ENCODE measurements at regions of chr22 and their contacts with region 1.

Region 1: DNA sequence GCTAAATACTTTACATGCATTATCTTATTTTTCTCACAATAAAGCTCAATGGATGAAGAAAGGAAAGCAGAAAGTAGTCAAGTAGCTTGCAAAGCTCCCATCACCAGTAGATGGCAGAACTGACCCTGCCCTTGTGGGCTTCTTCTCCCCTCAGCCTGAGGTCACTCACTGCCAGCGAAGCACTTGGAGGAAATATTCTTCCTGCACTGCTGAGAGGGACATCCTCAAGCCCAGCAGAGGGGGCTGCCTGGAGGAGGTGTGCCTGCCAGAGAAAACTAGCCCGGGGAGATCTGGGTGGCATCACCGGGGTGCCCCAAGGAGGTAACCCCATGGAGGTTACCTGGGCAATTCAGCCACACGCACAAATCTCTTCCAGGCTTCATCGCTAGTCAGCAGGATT is 6.6 kb downstream of the APOL4 start:
- DNase-seq: peak in 2 of 4 donors; percentile 67 to 75
- ATAC-seq: peak; percentile 90
- H3K4me3 ChIP-seq: no peak overlapping the region
- H3K27ac ChIP-seq: no peak overlapping the region
- H3K4me1 ChIP-seq: peaks cover 3 to 35% of the 10 kb centered on the region in 2 donors
- H3K27me3 ChIP-seq: no peaks in the 10 kb centered on the region
- CTCF ChIP-seq: peak; percentile 63 to 67

Region 2: DNA sequence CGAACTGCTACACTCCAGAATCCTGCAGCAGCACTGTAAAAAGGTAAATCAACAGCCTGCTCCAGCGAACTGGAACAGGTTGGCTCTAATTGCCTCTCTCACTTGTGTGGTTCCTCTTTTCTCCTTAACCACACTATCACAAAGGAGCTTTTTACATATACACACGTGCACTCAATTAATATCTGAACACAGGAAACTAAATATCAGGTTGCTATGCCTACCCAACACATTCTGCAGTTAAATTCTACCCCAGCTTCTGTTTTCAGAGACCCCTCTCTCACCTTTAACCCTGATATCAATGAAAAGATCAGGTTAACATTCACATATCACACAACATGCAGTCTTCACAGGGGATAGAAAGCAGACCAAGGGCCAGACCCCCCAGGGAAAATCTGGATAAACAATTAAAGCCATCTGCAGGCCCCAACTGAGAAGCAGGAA is 177.3 kb before region 1 on chr22:
- intact Hi-C with region 1: no loop called
- DNase-seq: no peak
- ATAC-seq: no peak
- H3K4me3 ChIP-seq: no peak overlapping the region
- H3K27ac ChIP-seq: no peak overlapping the region
- H3K4me1 ChIP-seq: peaks cover 19 to 33% of the 10 kb centered on the region in 2 donors
- H3K27me3 ChIP-seq: no peaks in the 10 kb centered on the region
- CTCF ChIP-seq: no peak

Region 3: GRCh38 chr22:36277482-36278291 is 82.7 kb after region 1 on chr22:
- intact Hi-C with region 1: loop called in 1 of 2 experiments (anchors 10 kb)
- DNase-seq: peak in 3 of 4 donors; percentile 29 to 63 (median 51)
- ATAC-seq: peak; percentile 85
- H3K4me3 ChIP-seq: no peak overlapping the region
- H3K27ac ChIP-seq: no peak overlapping the region
- H3K4me1 ChIP-seq: peaks cover 6 to 17% of the 10 kb centered on the region in 2 donors
- H3K27me3 ChIP-seq: no peaks in the 10 kb centered on the region
- CTCF ChIP-seq: peak; percentile 63 to 73

Region 4: DNA sequence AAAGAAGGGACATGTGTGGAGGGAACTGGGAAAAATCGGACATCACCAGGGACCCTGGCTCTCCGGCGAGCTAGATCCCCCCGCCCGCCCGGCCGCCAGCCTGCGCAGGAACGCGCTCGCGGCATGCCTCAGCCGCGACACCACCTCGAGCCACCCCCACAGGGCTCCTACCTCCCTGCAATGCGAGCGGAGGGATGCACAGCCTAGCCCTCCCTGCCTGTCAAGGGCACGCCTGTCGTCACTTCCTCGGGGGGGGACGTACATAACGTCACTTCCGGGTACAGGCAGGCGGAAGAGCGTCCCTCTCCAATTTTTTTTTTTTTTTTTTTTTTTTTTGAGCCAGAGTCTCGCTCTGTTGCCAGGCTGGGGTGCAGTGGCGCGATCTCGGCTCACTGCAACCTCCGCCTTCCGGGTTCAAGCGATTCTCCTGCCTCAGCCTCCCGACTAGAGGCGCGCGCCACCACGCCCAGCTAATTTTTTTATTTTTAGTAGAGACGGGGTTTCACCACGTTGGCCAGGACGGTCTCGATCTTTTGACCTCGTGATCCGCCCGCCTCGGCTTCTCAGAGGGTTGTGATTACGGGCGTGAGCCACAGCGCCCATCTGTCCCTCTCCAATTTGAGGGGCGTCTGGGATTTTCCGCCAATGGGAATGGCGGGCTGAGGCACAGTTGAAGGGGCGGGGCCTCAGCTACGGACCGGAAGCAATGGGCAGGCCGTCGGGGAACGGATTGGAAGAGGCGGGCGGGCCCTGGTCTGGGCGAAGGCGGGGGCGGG is 286.6 kb after region 1 on chr22 and contains the start of gene TXN2:
- intact Hi-C with region 1: loop called in 1 of 2 experiments (anchors 10 kb)
- DNase-seq: peak; percentile 97
- ATAC-seq: peak; percentile 96
- H3K4me3 ChIP-seq: peak within 1 kb of the TSS; percentile 73 to 77
- H3K27ac ChIP-seq: peak within 1 kb of the TSS; percentile 99
- H3K4me1 ChIP-seq: peaks cover 0 to 26% of the 10 kb centered on the region in 2 donors
- H3K27me3 ChIP-seq: no peaks in the 10 kb centered on the region
- CTCF ChIP-seq: no peak
- polyA plus RNA-seq, gene TXN2: 105 to 122 (median 108) TPM

Region 5: DNA sequence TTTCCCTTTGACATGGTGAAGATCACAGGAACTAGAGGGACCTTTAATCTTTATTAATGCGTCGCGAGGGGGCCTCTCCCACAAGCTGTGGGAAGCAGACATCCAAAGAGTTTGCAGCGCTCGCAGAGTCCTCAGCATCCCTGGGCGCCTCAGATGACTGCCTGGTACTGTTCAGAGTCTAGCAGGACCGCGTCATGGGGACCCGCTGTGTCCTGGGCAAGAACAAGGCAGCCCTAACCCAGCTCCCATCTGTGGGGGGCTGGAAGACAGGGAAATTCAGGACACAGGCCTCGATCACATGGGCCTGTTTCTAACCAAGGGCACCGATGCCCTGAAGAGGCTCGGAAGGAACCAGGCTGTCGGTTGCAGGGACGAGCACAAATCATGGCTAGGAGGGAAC is 468.6 kb after region 1 on chr22:
- intact Hi-C with region 1: no loop called
- DNase-seq: no peak
- ATAC-seq: no peak
- H3K4me3 ChIP-seq: no peak overlapping the region
- H3K27ac ChIP-seq: no peak overlapping the region
- H3K4me1 ChIP-seq: peaks cover 10 to 20% of the 10 kb centered on the region in 2 donors
- H3K27me3 ChIP-seq: peaks cover 0 to 46% of the 10 kb centered on the region in 2 donors
- CTCF ChIP-seq: no peak